ENCODE measurements at regions of chr6 and their contacts with region 1.

Region 1: DNA sequence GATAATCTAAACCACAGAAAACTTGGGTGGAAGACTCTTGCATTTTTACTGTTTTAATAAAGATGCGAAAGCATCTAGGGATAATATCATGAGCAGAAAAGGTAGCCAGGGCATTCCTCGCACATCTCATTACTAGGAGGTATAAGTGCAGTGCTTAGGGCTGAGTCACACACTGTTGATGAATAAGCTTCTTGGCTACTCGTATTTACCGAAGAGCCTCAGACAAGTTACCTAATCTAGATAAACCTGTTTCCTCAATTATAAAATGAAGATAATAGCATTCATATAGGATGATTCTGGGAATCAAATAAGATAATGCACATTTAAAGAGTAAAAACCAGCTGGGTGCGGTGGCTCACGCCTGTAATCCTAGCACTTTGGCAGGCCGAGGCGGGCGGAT is 791 bp upstream of the KIAA0319 start:
- DNase-seq: no peak
- ATAC-seq: no peak
- H3K4me3 ChIP-seq: no peak overlapping the region
- H3K27ac ChIP-seq: no peak overlapping the region
- H3K4me1 ChIP-seq: peaks cover 17 to 32% of the 10 kb centered on the region in 2 experiments
- H3K27me3 ChIP-seq: no peaks in the 10 kb centered on the region
- CTCF ChIP-seq: no peak
- POLR2A ChIP-seq: no peak
- RAD21 ChIP-seq: no peak

Region 2: GRCh38 chr6:24494821-24495795 is 151.7 kb before region 1 on chr6 and contains the start of gene ALDH5A1:
- CTCF ChIA-PET with region 1: no interaction called
- POLR2A ChIA-PET with region 1: no interaction called
- RAD21 ChIA-PET with region 1: no interaction called
- intact Hi-C with region 1: no loop called
- DNase-seq: peak; percentile 24
- ATAC-seq: peak; percentile 80
- H3K4me3 ChIP-seq: peak within 1 kb of the TSS; percentile 49 to 62
- H3K27ac ChIP-seq: peak within 1 kb of the TSS; percentile 72
- H3K4me1 ChIP-seq: peaks cover 5 to 14% of the 10 kb centered on the region in 2 experiments; a peak in 3 of 4 replicates
- H3K27me3 ChIP-seq: no peaks in the 10 kb centered on the region
- CTCF ChIP-seq: peak in 2 of 3 experiments; percentile 14 to 23; a peak in 2 of 6 replicates
- POLR2A ChIP-seq: no peak
- RAD21 ChIP-seq: peak; percentile 33
- total RNA-seq, gene ALDH5A1: 10.0 TPM

Region 3: DNA sequence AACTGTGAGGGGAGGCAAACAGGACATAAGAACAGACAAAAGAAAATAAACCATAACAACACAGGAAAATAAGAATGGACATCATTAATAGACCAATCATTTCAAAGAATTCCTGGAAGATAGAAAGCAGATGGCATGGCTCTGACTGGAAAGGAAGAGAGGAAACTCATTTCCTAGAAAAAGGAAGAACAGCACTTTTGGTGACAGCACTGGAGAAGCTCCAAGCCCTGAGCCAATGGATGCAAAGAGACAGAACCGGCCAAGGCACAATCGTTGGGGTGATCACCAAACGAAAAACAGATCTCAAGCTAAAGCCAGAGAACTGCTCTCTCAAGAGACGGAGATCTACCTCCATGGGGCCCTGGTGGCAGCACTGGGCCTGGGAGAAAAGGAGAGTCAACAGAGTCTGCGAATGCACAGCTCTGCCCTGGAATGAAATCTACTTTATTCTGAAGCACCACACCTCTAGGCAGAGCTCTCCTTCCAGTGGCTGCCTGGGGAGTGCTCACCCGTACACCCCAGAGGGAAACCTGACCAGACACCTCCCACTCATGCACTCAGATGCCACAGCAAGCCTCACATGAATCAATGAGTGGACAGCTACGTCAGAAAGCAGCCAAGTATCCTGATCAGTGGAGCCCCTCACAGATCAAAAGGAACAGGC is 25.0 kb before region 1 on chr6:
- CTCF ChIA-PET with region 1: no interaction called
- POLR2A ChIA-PET with region 1: interaction called, 10 read pairs
- RAD21 ChIA-PET with region 1: no interaction called
- intact Hi-C with region 1: no loop called
- DNase-seq: no peak
- ATAC-seq: no peak
- H3K4me3 ChIP-seq: no peak overlapping the region
- H3K27ac ChIP-seq: no peak overlapping the region
- H3K4me1 ChIP-seq: no peaks in the 10 kb centered on the region
- H3K27me3 ChIP-seq: no peaks in the 10 kb centered on the region
- CTCF ChIP-seq: no peak
- POLR2A ChIP-seq: no peak
- RAD21 ChIP-seq: no peak

Measured in HCT116 (cell line).